ENCODE measurements at regions of chr22 and their contacts with region 1.

Region 1: GRCh38 chr22:31148953-31149627 is 8.8 kb upstream of the PLA2G3 start:
- DNase-seq: peak; percentile 38 to 78 (median 68)
- H3K4me3 ChIP-seq: no peak overlapping the region
- H3K27ac ChIP-seq: peak overlapping the region in 45 of 59 donors; percentile 4 to 78 (median 56)
- H3K27me3 ChIP-seq: no peaks in the 10 kb centered on the region
- CTCF ChIP-seq: peak; percentile 30 to 96 (median 86)

Region 2: DNA sequence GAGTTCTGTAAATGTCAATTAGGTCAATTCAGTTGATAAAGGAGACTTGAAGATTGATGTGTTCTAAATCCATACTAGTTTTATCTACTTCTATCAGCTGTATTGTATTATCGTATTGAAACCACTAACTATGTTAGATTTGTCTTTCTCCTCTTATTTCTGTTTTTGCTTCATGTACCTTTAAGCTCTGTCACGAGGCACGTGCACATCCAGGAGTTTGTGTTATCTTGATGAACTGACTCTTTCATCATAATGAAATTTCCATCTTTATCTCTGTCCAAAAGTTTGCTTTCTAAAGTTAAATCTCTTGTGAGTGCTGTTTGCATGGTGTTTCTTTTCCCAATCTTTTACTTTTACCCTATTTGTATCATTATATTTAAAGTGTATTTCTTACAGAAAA is 296.0 kb before region 1 on chr22:
- intact Hi-C with region 1: no loop called
- DNase-seq: no peak
- H3K4me3 ChIP-seq: no peak overlapping the region
- H3K27ac ChIP-seq: no peak overlapping the region
- H3K27me3 ChIP-seq: no peaks in the 10 kb centered on the region
- CTCF ChIP-seq: no peak

Region 3: DNA sequence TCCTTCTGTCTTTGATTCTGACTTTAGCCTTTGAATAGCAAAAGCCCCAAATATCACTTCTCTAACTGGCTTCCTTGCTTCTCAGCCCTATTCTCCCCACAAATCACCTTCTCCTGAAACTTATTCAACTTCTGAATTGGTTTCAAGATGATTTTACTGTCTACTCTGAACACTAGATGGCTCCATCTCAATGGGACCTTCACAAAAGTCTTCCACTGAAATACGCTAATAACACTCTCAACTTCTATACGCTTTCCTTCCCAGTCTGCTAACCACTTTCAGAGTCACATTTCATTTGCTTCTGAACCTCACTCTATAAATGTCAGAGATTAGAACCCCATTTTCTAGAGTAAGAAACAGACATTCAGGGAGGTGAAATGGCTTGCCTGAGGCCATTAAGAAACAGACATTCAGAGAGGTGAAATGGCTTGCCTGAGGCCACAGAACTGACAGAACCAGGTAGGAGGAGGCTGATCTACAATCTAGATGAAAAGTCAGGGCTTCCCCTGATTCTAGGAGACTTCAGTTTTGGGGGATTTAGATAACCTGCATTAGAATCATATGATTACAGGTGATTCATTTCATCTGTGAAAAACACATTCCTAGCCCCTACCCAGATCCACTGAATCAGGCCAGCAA is 201.2 kb before region 1 on chr22:
- intact Hi-C with region 1: loop called in 1 of 2 experiments (anchors 2 kb)
- DNase-seq: no peak
- H3K4me3 ChIP-seq: peak overlapping the region in 3 of 59 donors; percentile 2 to 6 (median 6)
- H3K27ac ChIP-seq: peak overlapping the region in 54 of 59 donors; percentile 0 to 87 (median 68)
- H3K27me3 ChIP-seq: no peaks in the 10 kb centered on the region
- CTCF ChIP-seq: peak; percentile 48 to 83 (median 66)

Region 4: DNA sequence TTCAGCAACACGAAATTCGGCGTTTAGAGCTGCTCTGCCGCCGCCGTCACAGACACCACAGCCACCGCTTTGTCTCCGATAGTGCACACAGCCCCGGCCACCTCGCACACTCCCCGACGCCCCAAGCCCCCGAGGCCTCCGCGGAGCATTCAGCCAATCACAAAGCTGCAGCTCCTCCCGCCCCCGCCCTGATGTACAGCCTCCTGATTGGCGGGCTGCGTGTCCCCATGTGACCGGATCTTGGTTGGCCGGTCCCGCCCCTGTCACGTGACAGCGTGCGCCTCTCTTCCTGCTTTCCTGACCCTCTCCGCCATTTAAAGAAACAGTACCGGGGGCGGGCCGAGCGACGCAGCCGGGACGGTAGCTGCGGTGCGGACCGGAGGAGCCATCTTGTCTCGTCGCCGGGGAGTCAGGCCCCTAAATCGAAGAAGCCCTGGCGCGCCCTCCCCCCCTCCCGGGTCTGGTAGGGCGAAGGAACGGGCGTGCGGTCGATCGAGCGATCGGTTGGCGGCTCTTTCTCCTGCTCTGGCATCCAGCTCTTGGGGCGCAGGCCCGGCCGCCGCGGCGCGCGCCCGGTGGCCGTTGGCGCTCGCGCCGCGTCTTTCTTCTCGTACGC is 180.1 kb before region 1 on chr22 and contains the start of gene TUG1:
- intact Hi-C with region 1: loop called in 1 of 2 experiments (anchors 10 kb)
- DNase-seq: peak; percentile 97 to 99 (median 98)
- H3K4me3 ChIP-seq: peak within 1 kb of the TSS; percentile 62 to 98 (median 89)
- H3K27ac ChIP-seq: peak within 1 kb of the TSS; percentile 82 to 99 (median 94)
- H3K27me3 ChIP-seq: no peaks in the 10 kb centered on the region
- CTCF ChIP-seq: peak in 25 of 56 donors; percentile 6 to 54 (median 25)
- total RNA-seq, gene TUG1: 56.3 to 90.8 (median 71.5) TPM

Region 5: GRCh38 chr22:31080848-31081649 is 68.0 kb before region 1 on chr22 and contains the start of gene SMTN:
- intact Hi-C with region 1: loop called (anchors 5 kb)
- DNase-seq: peak; percentile 56 to 84 (median 68)
- H3K4me3 ChIP-seq: peak within 1 kb of the TSS; percentile 34 to 87 (median 59)
- H3K27ac ChIP-seq: peak within 1 kb of the TSS in 43 of 59 donors; percentile 1 to 99 (median 47)
- H3K27me3 ChIP-seq: peaks cover 0 to 5% (median 0%) of the 10 kb centered on the region in 45 donors
- CTCF ChIP-seq: no peak
- total RNA-seq, gene SMTN: 12.5 to 186 (median 28.4) TPM

Region 6: DNA sequence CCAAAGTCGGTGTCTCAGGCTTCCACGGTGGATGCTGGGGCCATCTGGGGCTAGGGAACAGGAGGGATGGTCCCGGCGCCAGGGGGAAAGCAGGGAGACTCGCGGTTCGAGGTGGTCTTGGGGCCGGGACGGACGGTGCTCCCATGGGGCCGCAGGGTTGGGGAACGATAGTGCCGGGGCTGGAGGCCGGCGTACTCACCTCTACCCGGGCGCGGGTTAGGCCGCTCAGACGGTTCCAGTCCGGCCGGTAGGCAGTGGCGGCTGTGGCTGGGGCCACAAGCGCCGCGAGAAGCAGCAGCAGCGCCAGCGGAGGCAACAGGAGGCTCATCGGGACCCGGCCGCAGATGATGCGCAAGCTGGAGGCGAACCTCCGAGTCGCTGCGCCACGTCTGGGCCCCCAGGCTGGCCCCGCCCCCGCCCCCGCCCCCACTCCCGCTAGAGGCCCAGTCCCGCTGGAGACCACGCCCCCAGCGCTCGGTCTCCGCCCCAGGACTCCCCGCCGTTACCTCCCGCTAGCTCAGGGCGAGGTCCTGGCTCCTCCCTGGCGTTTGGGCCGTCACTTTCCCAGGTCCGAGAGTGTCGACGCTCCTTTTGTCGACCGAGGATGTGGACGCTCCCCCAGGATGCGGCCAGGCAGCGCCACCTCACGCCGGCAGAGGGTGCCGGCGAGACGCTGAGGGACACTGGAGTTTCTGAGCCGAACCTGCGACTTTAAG is 41.8 kb before region 1 on chr22 and contains the start of gene SELENOM:
- intact Hi-C with region 1: loop called (anchors 5 kb)
- DNase-seq: peak; percentile 82 to 97 (median 93)
- H3K4me3 ChIP-seq: peak within 1 kb of the TSS; percentile 59 to 97 (median 88)
- H3K27ac ChIP-seq: peak within 1 kb of the TSS; percentile 7 to 97 (median 92)
- H3K27me3 ChIP-seq: no peaks in the 10 kb centered on the region
- CTCF ChIP-seq: peak; percentile 44 to 97 (median 86)
- total RNA-seq, gene SELENOM: 76.0 to 161 (median 116) TPM